ENCODE measurements at regions of chr19 and their contacts with region 1.

Region 1: GRCh38 chr19:3403489-3404323 is 37.3 kb downstream of the NFIC start:
- DNase-seq: peak; percentile 91 to 96 (median 95)
- ATAC-seq: peak; percentile 75 to 83 (median 80)
- H3K4me3 ChIP-seq: peak overlapping the region in 11 of 12 donors; percentile 8 to 63 (median 47)
- H3K27ac ChIP-seq: peak overlapping the region; percentile 95 to 100 (median 100)
- H3K4me1 ChIP-seq: peaks cover 9 to 91% (median 52%) of the 10 kb centered on the region in 12 donors
- H3K27me3 ChIP-seq: no peaks in the 10 kb centered on the region
- CTCF ChIP-seq: no peak
- POLR2A ChIP-seq: no peak

Region 2: DNA sequence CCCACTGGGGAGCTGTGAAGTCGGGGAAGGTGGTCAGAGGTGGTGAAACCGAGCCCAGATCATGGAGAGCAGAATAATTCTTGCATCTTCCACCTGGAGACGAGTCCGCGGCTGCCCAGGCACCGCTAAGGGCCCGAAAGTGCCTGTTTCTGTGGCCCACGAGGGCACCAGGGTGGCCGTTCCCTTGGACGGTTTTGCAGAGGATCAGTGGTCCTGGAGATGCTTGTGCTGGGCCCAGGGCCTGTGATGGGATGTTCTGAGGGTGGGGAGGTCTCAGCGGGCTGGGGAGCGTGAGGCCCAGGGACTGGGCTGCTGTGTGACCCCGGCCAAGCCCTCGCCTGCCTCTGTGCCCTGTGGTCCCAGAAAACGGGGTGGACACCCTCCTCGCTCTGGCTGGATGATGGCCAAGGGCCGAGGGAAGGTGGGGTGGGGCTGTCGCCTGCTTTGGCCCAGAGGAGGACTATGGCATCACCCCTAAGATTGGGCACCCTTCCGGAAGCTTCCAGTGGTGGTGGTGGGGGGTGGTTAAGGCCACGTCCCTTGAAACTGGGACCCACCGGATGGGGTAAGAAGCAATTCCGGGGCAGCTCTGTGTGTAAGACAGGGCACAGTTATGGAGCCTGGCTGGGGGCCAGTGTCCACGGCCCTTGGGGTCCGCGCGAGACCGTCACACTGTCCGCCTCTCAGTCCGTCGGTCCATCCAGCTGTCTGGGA is 88.6 kb before region 1 on chr19:
- intact Hi-C with region 1: no loop called
- DNase-seq: peak in 2 of 5 donors; percentile 17 to 26
- ATAC-seq: no peak
- H3K4me3 ChIP-seq: no peak overlapping the region
- H3K27ac ChIP-seq: no peak overlapping the region
- H3K4me1 ChIP-seq: no peaks in the 10 kb centered on the region
- H3K27me3 ChIP-seq: peaks cover 7 to 86% (median 33%) of the 10 kb centered on the region in 9 donors
- CTCF ChIP-seq: no peak
- POLR2A ChIP-seq: no peak

Region 3: GRCh38 chr19:3336680-3337523 is 66.8 kb before region 1 on chr19:
- intact Hi-C with region 1: loop called in 1 of 10 experiments (anchors 2 kb)
- DNase-seq: peak; percentile 85 to 96 (median 89)
- ATAC-seq: peak; percentile 91 to 96 (median 95)
- H3K4me3 ChIP-seq: no peak overlapping the region
- H3K27ac ChIP-seq: peak overlapping the region; percentile 84 to 99 (median 92)
- H3K4me1 ChIP-seq: peaks cover 5 to 44% (median 33%) of the 10 kb centered on the region in 12 donors
- H3K27me3 ChIP-seq: no peaks in the 10 kb centered on the region
- CTCF ChIP-seq: no peak
- POLR2A ChIP-seq: no peak

Region 4: DNA sequence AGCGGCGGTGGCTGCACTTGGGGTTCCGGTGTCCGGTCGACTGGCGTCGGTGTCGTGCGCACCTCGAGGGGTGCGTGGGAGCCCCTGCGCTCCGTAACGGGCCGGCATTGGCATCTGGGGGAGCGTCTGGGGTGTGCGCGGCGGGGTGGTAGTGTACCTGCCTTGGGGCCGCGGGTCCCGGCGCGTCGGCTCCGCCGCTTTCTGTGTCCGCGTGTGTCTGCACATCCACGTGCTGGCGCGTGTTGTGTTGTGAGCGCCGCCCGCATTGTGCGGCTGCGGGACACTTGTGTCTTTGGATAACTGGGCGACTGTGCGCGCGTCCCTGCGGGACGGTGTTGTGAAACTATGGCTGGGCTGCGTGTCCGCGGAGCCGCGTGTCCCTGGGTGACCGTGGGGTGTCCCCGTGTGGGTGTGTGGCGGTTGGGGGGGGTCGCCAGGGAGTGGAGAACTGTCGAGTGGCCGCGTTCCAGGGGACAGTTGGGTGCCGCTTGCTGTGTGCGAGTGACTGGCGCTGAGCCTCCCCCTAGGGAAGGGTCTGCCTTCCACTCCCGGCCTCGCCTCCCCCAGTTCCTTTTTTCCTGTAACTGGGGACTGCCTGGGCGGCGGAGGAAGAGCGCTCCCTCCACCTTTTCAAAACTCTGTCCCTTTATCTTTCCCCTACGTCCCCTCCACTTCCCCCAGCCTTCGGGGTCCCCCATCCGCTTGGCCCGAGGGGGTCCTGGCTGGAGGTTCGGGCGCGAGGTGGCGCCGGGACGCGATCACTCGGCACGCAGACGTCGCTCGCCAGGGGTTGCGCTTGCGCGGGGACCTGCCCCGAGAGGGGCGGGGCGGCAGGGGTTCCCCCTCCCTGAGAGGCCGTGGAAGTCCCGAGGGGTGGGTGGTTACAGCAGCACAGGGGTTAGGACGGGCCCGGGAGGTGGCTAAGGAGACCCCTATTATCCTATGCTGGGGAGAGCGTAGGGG is 43.0 kb before region 1 on chr19:
- intact Hi-C with region 1: loop called in 7 of 10 experiments (anchors 1 to 5 kb)
- DNase-seq: peak; percentile 76 to 90 (median 86)
- ATAC-seq: peak; percentile 55 to 80 (median 65)
- H3K4me3 ChIP-seq: peak overlapping the region; percentile 57 to 100 (median 97)
- H3K27ac ChIP-seq: peak overlapping the region; percentile 89 to 100 (median 98)
- H3K4me1 ChIP-seq: peaks cover 5 to 58% (median 34%) of the 10 kb centered on the region in 12 donors
- H3K27me3 ChIP-seq: peaks cover 0 to 3% (median 0%) of the 10 kb centered on the region in 9 donors
- CTCF ChIP-seq: peak in 7 of 12 donors; percentile 11 to 52 (median 37)
- POLR2A ChIP-seq: peak in 1 of 2 donors; percentile 67

Region 5: GRCh38 chr19:3365836-3366752 is 37.6 kb before region 1 on chr19 and contains the start of gene NFIC:
- intact Hi-C with region 1: loop called in 8 of 10 experiments (anchors 2 to 5 kb)
- DNase-seq: peak; percentile 83 to 90 (median 87)
- ATAC-seq: peak; percentile 59 to 72 (median 72)
- H3K4me3 ChIP-seq: peak within 1 kb of the TSS; percentile 75 to 97 (median 82)
- H3K27ac ChIP-seq: peak within 1 kb of the TSS; percentile 94 to 100 (median 97)
- H3K4me1 ChIP-seq: peaks cover 6 to 82% (median 49%) of the 10 kb centered on the region in 12 donors
- H3K27me3 ChIP-seq: no peaks in the 10 kb centered on the region
- CTCF ChIP-seq: no peak
- POLR2A ChIP-seq: no peak
- total RNA-seq, gene NFIC: 107 to 267 (median 155) TPM

Region 6: DNA sequence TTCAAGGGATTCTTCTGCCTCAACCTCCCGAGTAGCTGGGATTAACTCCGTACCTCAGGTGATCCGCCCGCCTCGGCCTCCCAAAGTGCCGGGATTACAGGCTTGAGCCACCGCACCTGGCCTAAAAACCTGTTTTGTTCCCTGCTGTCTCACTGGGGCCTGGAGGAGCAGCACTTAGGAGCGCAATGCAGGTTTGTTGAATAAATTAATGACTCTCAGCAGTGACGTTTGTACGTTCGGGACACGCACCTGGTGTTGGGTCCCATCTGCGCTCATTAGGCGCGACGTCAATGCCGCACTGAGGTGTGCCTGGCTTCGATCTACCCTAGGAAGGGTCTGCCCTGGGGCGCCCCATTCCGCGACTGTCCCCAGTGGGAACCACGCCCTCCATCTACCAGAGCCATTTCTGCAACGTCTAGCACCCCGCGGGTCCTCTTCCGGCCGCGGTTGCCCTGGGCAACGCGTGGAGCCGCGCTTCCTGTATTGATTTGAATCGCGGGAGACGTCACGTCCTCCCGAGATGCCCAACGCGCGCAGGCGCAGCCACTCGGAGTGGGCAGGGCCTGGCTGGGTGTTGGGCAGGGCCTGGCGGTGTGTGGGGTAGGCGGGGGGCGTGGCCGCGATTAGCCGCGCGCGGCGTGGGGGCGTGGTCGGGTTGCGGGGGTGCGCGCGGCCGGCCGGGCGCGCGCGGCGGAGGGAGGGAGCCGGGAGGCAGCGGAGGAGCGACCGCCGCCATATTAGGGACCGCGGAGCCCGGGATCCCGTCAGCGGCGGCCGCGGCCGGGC is 102.1 kb after region 1 on chr19 and contains the start of gene FZR1:
- intact Hi-C with region 1: no loop called
- DNase-seq: peak; percentile 99 to 100 (median 99)
- ATAC-seq: peak; percentile 96 to 98 (median 96)
- H3K4me3 ChIP-seq: peak within 1 kb of the TSS; percentile 81 to 100 (median 98)
- H3K27ac ChIP-seq: peak within 1 kb of the TSS; percentile 36 to 95 (median 84)
- H3K4me1 ChIP-seq: peaks cover 4 to 41% (median 18%) of the 10 kb centered on the region in 12 donors
- H3K27me3 ChIP-seq: no peaks in the 10 kb centered on the region
- CTCF ChIP-seq: peak in 4 of 12 donors; percentile 6 to 25 (median 16)
- POLR2A ChIP-seq: peak; percentile 29 to 65
- total RNA-seq, gene FZR1: 15.4 to 41.0 (median 26.4) TPM

Measured in heart left ventricle (tissue), 16 donors.